ENCODE measurements at regions of chr13 and their contacts with region 1.

Region 1: DNA sequence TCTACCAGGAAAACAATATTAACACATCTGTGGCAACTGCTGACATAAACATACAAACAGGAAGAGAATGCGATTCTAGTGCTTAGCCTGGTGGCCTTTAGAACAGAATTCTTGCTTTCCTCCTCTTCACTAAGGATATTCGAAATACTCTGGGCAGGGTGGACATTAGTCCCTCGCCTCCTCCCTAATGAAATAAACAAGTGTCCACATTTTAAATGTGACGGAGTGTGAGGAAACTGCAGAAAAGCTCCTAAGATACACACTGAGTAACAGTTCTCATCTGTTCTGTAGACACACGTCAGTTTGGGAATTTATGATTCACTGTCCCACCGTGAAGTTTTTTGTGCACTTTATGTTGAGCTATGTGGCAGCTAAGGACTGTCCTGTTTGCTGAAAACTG is 639 bp downstream of the STARD13 start:
- DNase-seq: no peak
- ATAC-seq: peak; percentile 29

Region 2: GRCh38 chr13:33034882-33035520 is 249.9 kb before region 1 on chr13:
- intact Hi-C with region 1: no loop called
- DNase-seq: no peak
- ATAC-seq: no peak

Region 3: DNA sequence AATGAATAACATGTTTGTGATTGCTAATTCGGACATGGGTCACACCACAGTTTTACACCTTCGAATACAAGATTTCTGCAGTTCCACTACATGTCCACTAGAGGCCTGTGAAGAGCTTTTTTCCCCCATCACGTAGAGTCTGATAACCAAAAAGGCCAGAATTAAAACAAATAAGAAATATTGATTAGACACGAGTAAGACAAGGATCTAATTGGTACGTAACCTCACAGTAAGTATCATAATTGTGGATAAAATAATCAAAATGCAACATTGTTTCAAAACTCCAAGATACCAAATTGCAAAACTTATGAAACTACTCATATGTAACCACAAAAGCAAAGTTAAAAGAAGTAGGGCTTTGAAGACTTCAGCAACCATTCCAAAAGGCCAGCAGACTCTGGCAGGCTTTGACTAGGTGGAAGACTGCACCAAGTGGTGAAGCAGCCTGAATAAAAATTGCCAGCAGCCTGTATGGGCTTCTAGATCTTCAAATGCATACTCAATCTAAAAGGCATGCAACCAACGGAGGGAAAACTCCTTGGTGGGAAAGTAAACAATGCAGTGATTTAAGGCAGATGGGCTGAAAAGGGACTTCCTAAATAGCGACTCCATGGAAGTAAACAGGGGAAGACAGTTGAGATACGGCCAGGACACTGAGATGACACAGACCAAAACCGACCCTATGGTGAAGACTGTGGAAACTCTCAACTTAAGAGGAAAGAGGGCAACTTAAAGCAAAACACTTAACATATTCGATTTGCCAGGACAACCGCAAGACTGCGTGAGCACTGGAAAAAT is 56.1 kb before region 1 on chr13:
- intact Hi-C with region 1: loop called (anchors 5 kb)
- DNase-seq: no peak
- ATAC-seq: peak; percentile 24

Region 4: DNA sequence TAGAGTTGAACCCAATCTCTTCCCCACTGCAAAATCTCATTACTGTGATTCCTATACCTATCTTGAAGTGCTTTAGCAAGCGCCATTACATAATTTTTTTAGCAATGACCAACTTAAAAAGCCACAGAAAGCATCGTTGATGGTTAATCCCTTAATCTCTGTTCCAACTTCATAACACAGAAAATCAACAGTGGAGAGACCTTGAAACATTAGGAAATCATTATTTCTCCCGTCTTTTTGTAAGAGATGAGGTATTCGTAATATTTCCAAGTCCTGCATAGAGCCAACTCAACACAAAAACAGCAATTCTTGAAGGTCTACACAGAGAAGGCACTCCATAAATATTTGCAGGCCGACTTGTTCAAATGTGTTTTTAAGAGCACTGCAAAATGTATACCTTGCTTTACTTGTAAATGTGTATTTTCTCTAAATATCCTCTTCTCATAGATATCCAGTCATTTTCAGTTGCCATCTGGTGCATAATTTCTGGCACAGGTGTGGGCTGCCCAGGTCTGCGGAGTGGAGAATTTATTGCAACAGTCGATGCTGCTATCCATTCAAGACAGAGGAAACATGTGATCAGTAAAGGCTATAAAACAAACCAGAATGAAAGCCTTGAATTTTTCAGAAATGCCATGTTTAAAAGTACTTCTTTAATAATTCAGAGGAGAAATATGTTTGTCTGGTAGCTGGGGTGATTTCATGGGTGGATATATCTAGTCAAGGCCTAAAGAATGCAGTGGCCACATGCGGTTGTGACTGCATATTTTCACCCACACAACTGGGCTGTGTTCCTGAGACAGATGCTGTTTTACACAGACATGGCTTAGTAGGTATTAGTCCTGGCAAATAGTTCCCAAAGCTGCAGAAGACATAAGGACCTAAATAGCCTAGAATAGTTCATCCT is 234.9 kb after region 1 on chr13:
- intact Hi-C with region 1: no loop called
- DNase-seq: no peak
- ATAC-seq: no peak